Lower lobe of right lung (tissue), 2 donors: ENCODE measurements at regions of chr9 and their contacts with region 1.

Region 1: DNA sequence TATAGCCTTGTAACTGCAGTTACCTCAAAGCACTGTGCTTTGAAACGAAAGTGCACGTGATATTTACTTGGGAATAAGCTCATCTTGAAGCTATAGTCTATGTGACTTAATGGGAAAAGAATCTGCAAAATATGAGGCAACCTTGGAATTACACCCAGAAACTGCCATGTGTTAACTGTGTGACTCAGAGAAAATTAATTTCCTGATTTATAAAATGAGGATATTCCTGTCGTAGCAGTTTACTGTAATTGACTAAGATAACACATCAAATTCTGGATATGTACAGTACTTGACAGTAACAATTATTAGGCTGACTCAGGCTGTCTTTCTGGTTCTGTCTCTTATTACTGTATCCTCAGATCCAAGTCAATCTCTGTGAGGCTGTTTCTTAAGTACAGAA is 1079.9 kb upstream of the ACO1 start:
- DNase-seq: no peak
- ATAC-seq: peak in 1 of 2 donors; percentile 31
- H3K4me3 ChIP-seq: no peak overlapping the region
- H3K27ac ChIP-seq: no peak overlapping the region
- H3K4me1 ChIP-seq: no peaks in the 10 kb centered on the region
- H3K27me3 ChIP-seq: no peaks in the 10 kb centered on the region
- CTCF ChIP-seq: no peak

Region 2: DNA sequence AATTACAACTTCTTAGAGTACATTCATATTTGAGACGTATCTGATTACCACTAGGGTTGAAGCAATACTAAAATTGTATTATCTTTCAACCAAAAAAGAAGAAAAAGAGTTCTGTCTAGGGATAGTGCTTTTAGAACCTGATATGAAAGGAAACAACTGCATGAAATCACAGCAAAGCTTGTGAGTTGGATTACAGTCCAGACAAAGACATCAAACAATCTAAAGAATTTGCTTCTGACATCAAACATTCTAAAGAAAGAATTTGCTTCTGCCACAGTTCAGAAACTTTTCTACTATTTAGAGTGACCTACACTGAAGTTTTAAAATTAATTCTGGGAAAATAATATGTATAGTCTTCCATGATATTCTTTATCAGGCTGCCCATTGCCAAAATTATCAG is 61.2 kb before region 1 on chr9:
- intact Hi-C with region 1: no loop called
- DNase-seq: no peak
- ATAC-seq: no peak
- H3K4me3 ChIP-seq: no peak overlapping the region
- H3K27ac ChIP-seq: no peak overlapping the region
- H3K4me1 ChIP-seq: no peaks in the 10 kb centered on the region
- H3K27me3 ChIP-seq: no peaks in the 10 kb centered on the region
- CTCF ChIP-seq: no peak

Region 3: GRCh38 chr9:31259824-31260223 is 44.8 kb before region 1 on chr9:
- intact Hi-C with region 1: loop called (anchors 5 kb)
- DNase-seq: no peak
- ATAC-seq: no peak
- H3K4me3 ChIP-seq: no peak overlapping the region
- H3K27ac ChIP-seq: no peak overlapping the region
- H3K4me1 ChIP-seq: no peaks in the 10 kb centered on the region
- H3K27me3 ChIP-seq: no peaks in the 10 kb centered on the region
- CTCF ChIP-seq: no peak

Region 4: DNA sequence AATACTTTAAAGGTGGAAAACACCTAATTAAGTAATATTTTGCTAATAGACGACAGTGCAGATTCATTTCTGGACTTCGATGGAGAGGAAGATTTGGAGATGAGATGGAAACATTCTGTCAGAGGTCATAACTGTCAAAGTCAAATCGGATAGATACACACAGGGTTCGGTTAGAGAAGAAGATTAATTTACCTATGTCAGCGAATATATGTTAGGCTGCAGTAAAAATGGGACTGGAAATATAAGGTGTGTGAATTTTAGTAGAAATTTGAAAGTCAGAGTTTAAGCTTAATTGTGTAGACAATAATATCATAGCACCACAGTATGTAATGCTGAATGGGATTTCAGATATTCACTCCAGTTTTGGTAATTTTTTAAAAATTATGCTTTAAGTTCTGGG is 59.6 kb after region 1 on chr9:
- intact Hi-C with region 1: no loop called
- DNase-seq: no peak
- ATAC-seq: no peak
- H3K4me3 ChIP-seq: no peak overlapping the region
- H3K27ac ChIP-seq: no peak overlapping the region
- H3K4me1 ChIP-seq: no peaks in the 10 kb centered on the region
- H3K27me3 ChIP-seq: no peaks in the 10 kb centered on the region
- CTCF ChIP-seq: no peak